ENCODE measurements at regions of chr11 and their contacts with region 1.

Region 1: DNA sequence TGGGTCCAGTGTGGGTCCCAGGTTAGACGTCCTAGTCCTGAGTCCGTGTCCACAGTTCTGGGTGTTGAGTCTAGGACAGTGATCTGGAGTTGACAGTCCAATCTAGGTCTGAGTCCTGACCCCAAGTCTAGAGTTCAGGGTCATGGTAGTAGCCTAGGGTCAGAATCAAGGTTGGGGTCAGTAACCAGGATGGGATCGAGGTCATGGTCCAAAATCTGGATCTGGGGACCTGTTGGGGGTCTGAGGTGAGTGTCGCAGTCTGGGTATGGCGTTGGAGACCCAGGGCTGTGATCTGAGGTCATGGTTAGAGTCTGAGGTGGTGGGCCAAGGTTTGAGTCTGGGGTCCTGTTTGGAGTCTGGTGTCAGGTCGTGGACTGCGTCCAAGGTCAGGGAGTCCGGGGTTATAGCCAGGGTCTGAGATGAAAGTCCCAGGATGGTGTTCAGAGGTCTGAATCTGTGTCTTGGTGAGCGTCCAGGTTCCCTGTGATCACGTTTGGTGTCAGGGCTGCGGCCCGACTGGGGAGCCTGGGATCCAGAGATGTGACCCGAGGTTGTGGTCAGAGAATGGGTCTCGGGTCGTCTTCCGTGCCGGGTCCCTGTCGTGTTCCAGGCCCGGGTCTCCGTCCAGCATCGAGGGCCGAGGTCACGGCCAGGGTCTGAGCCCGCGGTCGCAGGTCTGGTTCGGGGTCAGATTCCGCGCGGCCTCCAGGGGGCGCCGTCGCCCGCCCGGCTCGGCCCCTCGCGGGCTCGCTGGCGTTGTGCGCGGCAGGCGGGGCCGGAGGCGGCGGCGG is 445 bp upstream of the GRK2 start:
- DNase-seq: peak; percentile 46
- H3K4me3 ChIP-seq: peak overlapping the region in 2 of 3 experiments; percentile 20 to 33
- H3K27ac ChIP-seq: no peak overlapping the region
- H3K4me1 ChIP-seq: peaks cover 62% of the 10 kb centered on the region
- H3K27me3 ChIP-seq: no peaks in the 10 kb centered on the region
- CTCF ChIP-seq: peak; percentile 36 to 65

Region 2: DNA sequence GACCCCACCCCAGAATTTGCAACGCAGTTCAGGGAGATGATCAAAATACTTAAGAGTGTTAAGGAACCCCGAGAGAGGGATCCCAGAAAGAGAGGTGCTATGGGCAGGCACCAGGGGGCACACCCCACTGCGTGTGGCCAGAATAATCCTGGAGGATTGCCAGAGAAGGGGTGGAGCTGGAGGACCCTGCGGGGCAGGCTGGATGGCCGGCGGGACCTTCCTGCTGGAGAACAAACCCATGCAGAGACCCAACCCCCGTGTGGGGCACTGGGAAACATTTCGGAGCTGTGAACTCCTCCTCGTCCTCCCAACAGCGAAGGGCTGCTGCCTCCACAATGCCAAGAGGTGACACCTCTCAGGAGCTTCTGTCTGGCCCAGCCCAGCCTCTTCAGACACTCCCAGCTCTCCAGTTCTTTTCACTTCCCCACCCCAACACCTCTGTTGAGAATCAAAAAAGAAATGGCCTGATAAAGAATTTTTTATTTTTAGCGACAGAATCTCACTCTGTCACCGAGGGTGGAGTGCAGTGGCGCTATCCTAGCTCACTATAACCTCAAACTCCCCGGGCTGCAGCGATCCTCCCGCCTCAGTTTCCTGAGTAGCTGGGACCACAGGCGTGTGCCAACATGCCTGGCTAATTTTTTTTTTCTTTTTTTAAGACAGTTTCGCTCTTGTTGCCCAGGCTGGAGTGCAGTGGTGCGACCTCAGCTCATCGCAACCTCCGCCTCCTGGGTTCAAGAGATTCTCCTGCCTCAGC is 183.6 kb before region 1 on chr11:
- CTCF ChIA-PET with region 1: interaction called, 21 read pairs
- dilution Hi-C with region 1: no loop called
- in situ Hi-C with region 1: no loop called
- intact Hi-C with region 1: no loop called
- DNase-seq: no peak
- H3K4me3 ChIP-seq: no peak overlapping the region
- H3K27ac ChIP-seq: no peak overlapping the region
- H3K4me1 ChIP-seq: peaks cover 30% of the 10 kb centered on the region
- H3K27me3 ChIP-seq: no peaks in the 10 kb centered on the region
- CTCF ChIP-seq: peak in 1 of 2 donors; percentile 24

Region 3: GRCh38 chr11:67213178-67213621 is 52.6 kb before region 1 on chr11:
- CTCF ChIA-PET with region 1: no interaction called
- dilution Hi-C with region 1: no loop called
- in situ Hi-C with region 1: no loop called
- intact Hi-C with region 1: no loop called
- DNase-seq: no peak
- H3K4me3 ChIP-seq: no peak overlapping the region
- H3K27ac ChIP-seq: no peak overlapping the region
- H3K4me1 ChIP-seq: no peaks in the 10 kb centered on the region
- H3K27me3 ChIP-seq: no peaks in the 10 kb centered on the region
- CTCF ChIP-seq: no peak

Region 4: GRCh38 chr11:67252831-67253239 is 13.0 kb before region 1 on chr11:
- CTCF ChIA-PET with region 1: interaction called, 6 read pairs
- dilution Hi-C with region 1: no loop called
- in situ Hi-C with region 1: no loop called
- intact Hi-C with region 1: loop called (anchors 1 kb)
- DNase-seq: peak; percentile 49
- H3K4me3 ChIP-seq: no peak overlapping the region
- H3K27ac ChIP-seq: peak overlapping the region; percentile 34
- H3K4me1 ChIP-seq: peaks cover 32% of the 10 kb centered on the region
- H3K27me3 ChIP-seq: no peaks in the 10 kb centered on the region
- CTCF ChIP-seq: peak; percentile 70 to 80

Region 5: GRCh38 chr11:67288452-67289225 is 22.8 kb after region 1 on chr11:
- CTCF ChIA-PET with region 1: no interaction called
- dilution Hi-C with region 1: no loop called
- in situ Hi-C with region 1: no loop called
- intact Hi-C with region 1: loop called (anchors 1 kb)
- DNase-seq: peak; percentile 85
- H3K4me3 ChIP-seq: peak overlapping the region; percentile 45 to 65 (median 64)
- H3K27ac ChIP-seq: peak overlapping the region; percentile 57
- H3K4me1 ChIP-seq: peaks cover 34% of the 10 kb centered on the region
- H3K27me3 ChIP-seq: no peaks in the 10 kb centered on the region
- CTCF ChIP-seq: no peak

Region 6: DNA sequence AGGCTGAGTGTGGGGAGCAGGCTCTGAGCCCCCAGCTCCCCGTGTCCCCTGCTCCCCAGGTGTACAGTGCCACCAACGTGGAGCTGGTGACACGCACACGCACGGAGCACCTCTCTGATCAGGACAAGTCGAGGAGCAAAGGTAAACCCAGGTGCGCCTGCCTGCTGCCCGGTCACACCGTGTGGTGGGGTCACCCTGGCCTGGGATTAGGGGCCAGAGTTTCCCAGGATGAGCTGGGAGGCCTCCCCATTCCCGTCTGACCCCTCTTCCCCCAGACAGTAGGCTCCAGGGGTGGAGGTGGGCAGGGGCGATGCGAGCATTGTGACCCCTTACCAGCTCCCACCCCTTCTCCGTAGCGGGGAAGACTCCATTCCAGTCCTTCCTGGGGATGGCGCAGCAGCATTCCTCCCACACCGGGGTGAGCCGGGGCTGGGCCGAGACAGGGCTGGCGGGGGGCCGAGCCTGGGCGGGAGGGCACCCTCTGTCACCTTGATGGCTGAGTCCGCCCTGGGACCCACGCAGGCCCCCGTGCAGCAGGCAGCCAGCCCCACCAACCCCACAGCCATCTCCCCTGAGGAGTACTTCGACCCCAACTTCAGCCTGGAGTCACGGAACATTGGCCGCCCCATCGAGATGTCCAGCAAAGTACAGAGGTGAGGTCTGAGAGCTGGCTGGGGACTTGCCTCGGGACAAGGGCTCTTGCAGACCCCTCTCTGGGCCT is 33.8 kb after region 1 on chr11:
- CTCF ChIA-PET with region 1: no interaction called
- dilution Hi-C with region 1: no loop called
- in situ Hi-C with region 1: no loop called
- intact Hi-C with region 1: no loop called
- DNase-seq: no peak
- H3K4me3 ChIP-seq: no peak overlapping the region
- H3K27ac ChIP-seq: no peak overlapping the region
- H3K4me1 ChIP-seq: peaks cover 14% of the 10 kb centered on the region
- H3K27me3 ChIP-seq: no peaks in the 10 kb centered on the region
- CTCF ChIP-seq: no peak

Region 7: GRCh38 chr11:67310221-67311050 is 44.6 kb after region 1 on chr11:
- CTCF ChIA-PET with region 1: interaction called, 16 read pairs
- dilution Hi-C with region 1: loop called (anchors 5 kb)
- in situ Hi-C with region 1: loop called (anchors 5 kb)
- intact Hi-C with region 1: no loop called
- DNase-seq: peak; percentile 60
- H3K4me3 ChIP-seq: no peak overlapping the region
- H3K27ac ChIP-seq: peak overlapping the region; percentile 6
- H3K4me1 ChIP-seq: peaks cover 45% of the 10 kb centered on the region
- H3K27me3 ChIP-seq: no peaks in the 10 kb centered on the region
- CTCF ChIP-seq: no peak

Region 8: GRCh38 chr11:67382276-67383136 is 116.7 kb after region 1 on chr11:
- CTCF ChIA-PET with region 1: interaction called, 5 read pairs
- dilution Hi-C with region 1: no loop called
- in situ Hi-C with region 1: loop called in 1 of 2 experiments (anchors 10 kb)
- intact Hi-C with region 1: loop called (anchors 1 kb)
- DNase-seq: peak; percentile 58
- H3K4me3 ChIP-seq: no peak overlapping the region
- H3K27ac ChIP-seq: no peak overlapping the region
- H3K4me1 ChIP-seq: peaks cover 32% of the 10 kb centered on the region
- H3K27me3 ChIP-seq: no peaks in the 10 kb centered on the region
- CTCF ChIP-seq: peak; percentile 99 to 100

Region 9: DNA sequence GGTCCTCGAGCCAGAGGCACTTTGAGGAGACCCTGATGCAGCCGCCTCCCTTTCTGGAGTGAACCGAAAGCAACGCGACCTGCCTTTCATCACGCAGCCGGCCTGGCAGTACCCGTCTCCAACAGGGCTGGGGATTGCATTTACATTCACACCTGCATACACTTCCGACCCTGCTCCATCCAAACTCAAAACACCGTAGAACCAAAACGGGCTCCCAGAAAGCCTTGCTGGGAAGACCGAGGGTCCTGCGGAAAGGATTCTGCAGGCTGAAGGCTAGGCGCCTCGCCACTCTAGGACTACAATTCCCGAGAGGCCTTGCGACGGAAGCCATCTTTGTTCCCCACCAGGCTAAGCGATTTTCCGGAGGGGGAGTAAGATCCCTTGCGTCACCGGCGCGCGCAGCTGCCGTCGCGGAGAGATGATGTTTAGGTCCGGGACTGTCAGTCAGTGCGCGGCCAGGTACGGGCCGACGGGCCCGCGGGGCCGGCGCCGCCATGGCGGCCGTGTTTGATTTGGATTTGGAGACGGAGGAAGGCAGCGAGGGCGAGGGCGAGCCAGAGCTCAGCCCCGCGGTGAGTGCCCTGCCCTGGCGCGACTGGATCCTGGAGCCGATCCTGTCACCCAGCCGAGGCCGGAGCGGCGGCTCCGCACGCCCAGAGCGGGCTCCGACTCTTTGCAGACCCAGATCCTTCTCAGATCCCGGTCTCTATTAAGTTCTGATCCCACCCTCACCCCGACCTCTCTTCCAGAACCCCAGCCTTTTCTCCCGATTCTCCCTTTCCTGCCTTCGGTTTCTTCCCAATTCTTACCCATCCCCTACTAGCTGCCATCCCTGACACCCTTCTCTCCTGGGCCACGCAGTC is 162.5 kb after region 1 on chr11 and contains the start of gene RPS6KB2:
- CTCF ChIA-PET with region 1: no interaction called
- dilution Hi-C with region 1: no loop called
- in situ Hi-C with region 1: no loop called
- intact Hi-C with region 1: no loop called
- DNase-seq: peak; percentile 95
- H3K4me3 ChIP-seq: peak within 1 kb of the TSS; percentile 62 to 72 (median 71)
- H3K27ac ChIP-seq: peak within 1 kb of the TSS; percentile 58
- H3K4me1 ChIP-seq: peaks cover 12% of the 10 kb centered on the region
- H3K27me3 ChIP-seq: no peaks in the 10 kb centered on the region
- CTCF ChIP-seq: no peak
- total RNA-seq, gene RPS6KB2: 35.7 to 62.3 TPM

Measured in mammary epithelial cell (primary cell).